Panc1 (cell line): ENCODE measurements at regions of chr17 and their contacts with region 1.

Region 1: GRCh38 chr17:58605470-58605869 is 86.4 kb downstream of the TEX14 start:
- DNase-seq: no peak
- ATAC-seq: no peak
- H3K4me3 ChIP-seq: no peak overlapping the region
- H3K27ac ChIP-seq: no peak overlapping the region
- H3K4me1 ChIP-seq: no peaks in the 10 kb centered on the region
- H3K27me3 ChIP-seq: no peaks in the 10 kb centered on the region
- CTCF ChIP-seq: no peak

Region 2: DNA sequence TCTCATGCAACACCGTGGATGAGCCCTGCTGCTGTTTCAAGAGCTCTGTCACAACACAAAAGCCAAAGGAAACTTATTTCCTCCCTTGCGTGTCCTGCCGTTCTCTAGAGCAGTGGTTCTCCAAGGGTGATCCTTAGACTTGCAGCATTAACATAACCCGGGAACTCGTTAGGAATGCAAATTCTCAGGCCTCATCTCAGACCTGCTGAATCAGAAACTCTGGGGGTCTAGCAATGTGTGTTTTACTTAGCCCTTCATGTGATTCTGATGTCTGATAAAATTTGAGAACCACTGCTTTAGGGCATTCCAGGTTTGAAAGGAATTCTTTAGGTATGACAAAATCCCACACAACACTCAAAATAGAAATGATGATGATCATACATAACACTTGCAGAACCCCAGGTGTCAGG is 39.7 kb before region 1 on chr17:
- CTCF ChIA-PET with region 1: no interaction called
- POLR2A ChIA-PET with region 1: interaction called, 14 read pairs
- in situ Hi-C with region 1: no loop called
- intact Hi-C with region 1: no loop called
- DNase-seq: no peak
- ATAC-seq: no peak
- H3K4me3 ChIP-seq: no peak overlapping the region
- H3K27ac ChIP-seq: no peak overlapping the region
- H3K4me1 ChIP-seq: no peaks in the 10 kb centered on the region
- H3K27me3 ChIP-seq: no peaks in the 10 kb centered on the region; the same call in 1 of the 2 replicates
- CTCF ChIP-seq: no peak